T-cell (primary cell): ENCODE measurements at regions of chr11 and their contacts with region 1.

Region 1: GRCh38 chr11:130131961-130132850 is 27.4 kb upstream of the ST14 start:
- DNase-seq: peak in 34 of 35 experiments; percentile 5 to 78 (median 30)
- ATAC-seq: peak; percentile 68 to 80 (median 73)
- H3K4me3 ChIP-seq: no peak overlapping the region
- H3K4me3 Mint-ChIP-seq: no peak overlapping the region
- H3K27ac ChIP-seq: no peak overlapping the region
- H3K27ac Mint-ChIP-seq: no peak overlapping the region
- H3K4me1 ChIP-seq: no peaks in the 10 kb centered on the region
- H3K4me1 Mint-ChIP-seq: no peaks in the 10 kb centered on the region
- H3K27me3 ChIP-seq: no peaks in the 10 kb centered on the region
- H3K27me3 Mint-ChIP-seq: no peaks in the 10 kb centered on the region

Region 2: DNA sequence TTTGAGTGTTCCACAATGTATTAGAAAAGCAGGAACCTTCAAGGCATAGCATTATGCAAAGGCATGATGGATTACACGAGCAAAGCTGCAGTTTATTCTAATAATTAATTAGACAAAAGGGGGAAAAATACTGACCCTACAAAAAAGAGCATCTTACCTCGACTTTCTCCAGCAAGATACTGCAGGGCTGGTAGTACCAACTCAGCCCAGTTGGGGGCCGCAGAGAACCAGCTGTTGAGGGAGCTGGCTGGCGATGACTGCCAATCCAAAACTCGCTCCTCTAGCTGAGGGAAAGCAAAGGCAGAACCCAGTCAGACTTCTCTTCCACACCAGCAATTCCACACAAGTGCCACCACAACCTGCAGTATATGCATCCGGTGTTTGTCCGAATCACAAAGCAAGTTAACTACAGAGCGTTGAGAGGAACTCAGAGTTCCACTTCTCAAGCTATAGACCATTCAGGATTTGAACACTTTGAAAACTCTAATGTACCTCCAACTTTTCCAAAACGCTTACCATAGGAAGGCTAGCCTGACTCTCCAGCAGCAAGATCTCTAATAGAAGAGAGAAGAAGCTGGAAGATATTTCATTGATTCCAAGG is 250.5 kb before region 1 on chr11:
- CTCF ChIA-PET with region 1: interaction called, 6 to 16 read pairs
- POLR2A ChIA-PET with region 1: no interaction called
- DNase-seq: peak in 31 of 35 experiments; percentile 10 to 60 (median 42)
- ATAC-seq: peak; percentile 43 to 77 (median 70)
- H3K4me3 ChIP-seq: no peak overlapping the region
- H3K4me3 Mint-ChIP-seq: no peak overlapping the region
- H3K27ac ChIP-seq: no peak overlapping the region
- H3K27ac Mint-ChIP-seq: peak overlapping the region in 1 of 2 donors; percentile 11
- H3K4me1 ChIP-seq: no peaks in the 10 kb centered on the region
- H3K4me1 Mint-ChIP-seq: peaks cover 0 to 5% (median 5%) of the 10 kb centered on the region in 3 donors
- H3K27me3 ChIP-seq: no peaks in the 10 kb centered on the region
- H3K27me3 Mint-ChIP-seq: no peaks in the 10 kb centered on the region

Region 3: DNA sequence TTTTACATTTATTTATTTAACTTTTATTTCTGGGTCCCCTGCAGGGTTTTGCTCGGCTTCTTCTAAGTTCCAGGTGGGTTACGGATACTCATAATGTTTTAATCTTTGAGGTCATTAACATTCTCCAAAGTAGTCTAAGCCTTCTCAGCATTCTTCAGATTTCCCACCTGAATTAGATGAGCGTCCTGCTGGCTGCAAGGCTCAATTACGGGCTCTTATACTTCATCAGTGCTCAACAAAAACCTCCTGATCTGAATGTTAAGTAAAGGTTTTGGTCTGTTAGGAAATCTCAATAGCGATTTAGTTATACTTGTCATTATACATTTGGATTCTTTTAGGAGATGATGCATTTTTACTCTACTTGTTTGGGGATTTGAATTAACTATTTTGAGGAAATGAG is 209.5 kb before region 1 on chr11:
- CTCF ChIA-PET with region 1: interaction called, 50 to 118 read pairs
- POLR2A ChIA-PET with region 1: interaction called in 1 of 2 experiments, 3 read pairs
- DNase-seq: no peak
- ATAC-seq: no peak
- H3K4me3 ChIP-seq: no peak overlapping the region
- H3K4me3 Mint-ChIP-seq: no peak overlapping the region
- H3K27ac ChIP-seq: no peak overlapping the region
- H3K27ac Mint-ChIP-seq: peak overlapping the region; percentile 54 to 84
- H3K4me1 ChIP-seq: peaks cover 0 to 7% of the 10 kb centered on the region in 2 experiments
- H3K4me1 Mint-ChIP-seq: peaks cover 7 to 11% (median 9%) of the 10 kb centered on the region in 3 donors
- H3K27me3 ChIP-seq: no peaks in the 10 kb centered on the region
- H3K27me3 Mint-ChIP-seq: no peaks in the 10 kb centered on the region

Region 4: DNA sequence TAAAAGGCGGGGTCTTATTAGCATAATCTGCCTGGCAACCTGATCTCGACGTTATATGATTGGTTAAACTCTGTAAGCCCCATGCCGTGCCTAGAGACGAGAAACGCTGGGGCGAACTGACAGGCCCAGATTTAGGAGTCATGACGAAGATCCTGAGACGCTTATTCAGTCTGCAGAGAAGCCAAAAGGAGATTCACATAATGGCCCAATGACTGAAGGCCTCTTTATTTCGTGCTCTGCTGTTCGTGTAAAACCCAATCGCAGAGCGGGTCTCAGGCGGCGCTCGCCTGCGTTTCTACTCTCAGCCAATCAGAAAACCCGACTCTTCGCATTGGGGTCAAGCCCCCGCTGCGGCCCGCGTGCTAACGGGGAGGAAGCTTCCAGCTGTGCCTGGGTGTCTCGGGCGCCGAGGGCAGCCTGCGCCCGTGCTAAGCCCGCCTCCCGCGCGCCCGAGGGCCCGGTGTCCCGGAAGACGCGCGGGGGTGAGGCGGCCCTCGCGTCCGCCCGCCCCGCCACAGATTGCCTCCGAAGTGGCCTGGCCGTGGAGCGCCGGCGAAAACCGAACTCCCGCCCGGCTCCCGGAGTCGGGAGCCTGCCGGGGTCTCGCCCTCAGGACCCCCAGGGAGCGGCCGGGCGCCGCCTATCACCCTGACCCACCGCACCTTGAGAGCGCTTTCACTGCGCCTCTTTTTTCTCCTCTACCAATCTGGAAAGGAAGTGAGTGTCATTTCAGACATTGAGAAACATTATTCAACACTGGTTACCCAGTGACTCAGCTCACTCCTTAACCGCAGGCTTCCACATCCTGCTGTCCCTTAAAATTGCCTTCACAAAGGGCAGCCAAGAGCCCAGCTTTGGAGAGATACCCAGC is 129.1 kb before region 1 on chr11:
- CTCF ChIA-PET with region 1: interaction called, 3 to 18 read pairs
- POLR2A ChIA-PET with region 1: interaction called in 1 of 2 experiments, 10 read pairs
- DNase-seq: peak; percentile 76 to 95 (median 87)
- ATAC-seq: peak; percentile 72 to 81 (median 78)
- H3K4me3 ChIP-seq: peak overlapping the region; percentile 61 to 87
- H3K4me3 Mint-ChIP-seq: peak overlapping the region; percentile 86 to 100 (median 99)
- H3K27ac ChIP-seq: peak overlapping the region; percentile 95
- H3K27ac Mint-ChIP-seq: peak overlapping the region; percentile 100
- H3K4me1 ChIP-seq: peaks cover 8 to 26% of the 10 kb centered on the region in 2 experiments
- H3K4me1 Mint-ChIP-seq: peaks cover 36 to 48% (median 42%) of the 10 kb centered on the region in 3 donors
- H3K27me3 ChIP-seq: no peaks in the 10 kb centered on the region
- H3K27me3 Mint-ChIP-seq: no peaks in the 10 kb centered on the region

Region 5: DNA sequence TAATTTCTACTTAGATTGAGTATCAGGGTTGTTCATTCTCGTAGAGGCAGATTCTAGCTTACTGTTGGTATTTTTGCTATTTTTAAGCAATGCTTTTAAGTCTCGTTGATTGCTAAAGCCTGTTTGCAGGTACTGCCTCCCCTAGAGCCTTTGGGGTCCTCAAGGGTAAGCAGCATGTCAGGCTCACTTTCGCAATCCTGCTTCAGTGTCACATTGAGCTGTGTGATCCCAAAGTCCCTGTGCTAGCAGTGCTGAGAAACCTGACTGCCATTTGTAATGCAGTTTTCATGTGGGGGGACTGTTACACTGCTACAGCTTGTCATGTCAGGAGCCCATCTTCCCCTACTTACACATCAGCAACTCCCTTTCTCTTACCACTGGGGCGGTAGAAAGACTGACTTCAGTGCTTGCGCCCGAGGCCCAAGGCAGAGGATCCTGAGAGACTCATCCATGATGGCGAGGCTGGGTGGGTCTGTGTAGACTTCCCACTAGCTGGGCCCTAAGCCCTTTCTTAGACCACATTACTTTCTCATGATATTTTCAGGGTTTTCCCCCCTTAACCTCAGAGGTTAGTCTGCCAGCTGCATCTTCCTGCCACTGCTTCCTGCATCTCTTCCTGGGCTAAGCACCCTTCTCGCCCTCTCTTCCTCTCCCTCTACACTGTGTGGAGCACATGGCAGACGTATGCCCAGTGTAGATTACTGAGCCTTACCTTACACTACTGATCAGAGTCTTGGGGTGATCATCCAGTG is 13.4 kb before region 1 on chr11:
- CTCF ChIA-PET with region 1: interaction called, 9 to 15 read pairs
- POLR2A ChIA-PET with region 1: interaction called in 1 of 2 experiments, 6 read pairs
- DNase-seq: peak in 28 of 35 experiments; percentile 4 to 60 (median 13)
- ATAC-seq: peak; percentile 59 to 88 (median 79)
- H3K4me3 ChIP-seq: peak overlapping the region in 1 of 2 donors; percentile 28
- H3K4me3 Mint-ChIP-seq: peak overlapping the region in 1 of 3 donors; percentile 67
- H3K27ac ChIP-seq: no peak overlapping the region
- H3K27ac Mint-ChIP-seq: no peak overlapping the region
- H3K4me1 ChIP-seq: peaks cover 25 to 38% of the 10 kb centered on the region in 2 experiments
- H3K4me1 Mint-ChIP-seq: peaks cover 41 to 53% (median 45%) of the 10 kb centered on the region in 3 donors
- H3K27me3 ChIP-seq: peaks cover 0 to 3% of the 10 kb centered on the region in 2 experiments
- H3K27me3 Mint-ChIP-seq: no peaks in the 10 kb centered on the region